Activated B cell treated with CpG ODN at 0.5 μM for 24 hours (primary cell): ENCODE measurements at regions of chr18 and their contacts with region 1.

Region 1: DNA sequence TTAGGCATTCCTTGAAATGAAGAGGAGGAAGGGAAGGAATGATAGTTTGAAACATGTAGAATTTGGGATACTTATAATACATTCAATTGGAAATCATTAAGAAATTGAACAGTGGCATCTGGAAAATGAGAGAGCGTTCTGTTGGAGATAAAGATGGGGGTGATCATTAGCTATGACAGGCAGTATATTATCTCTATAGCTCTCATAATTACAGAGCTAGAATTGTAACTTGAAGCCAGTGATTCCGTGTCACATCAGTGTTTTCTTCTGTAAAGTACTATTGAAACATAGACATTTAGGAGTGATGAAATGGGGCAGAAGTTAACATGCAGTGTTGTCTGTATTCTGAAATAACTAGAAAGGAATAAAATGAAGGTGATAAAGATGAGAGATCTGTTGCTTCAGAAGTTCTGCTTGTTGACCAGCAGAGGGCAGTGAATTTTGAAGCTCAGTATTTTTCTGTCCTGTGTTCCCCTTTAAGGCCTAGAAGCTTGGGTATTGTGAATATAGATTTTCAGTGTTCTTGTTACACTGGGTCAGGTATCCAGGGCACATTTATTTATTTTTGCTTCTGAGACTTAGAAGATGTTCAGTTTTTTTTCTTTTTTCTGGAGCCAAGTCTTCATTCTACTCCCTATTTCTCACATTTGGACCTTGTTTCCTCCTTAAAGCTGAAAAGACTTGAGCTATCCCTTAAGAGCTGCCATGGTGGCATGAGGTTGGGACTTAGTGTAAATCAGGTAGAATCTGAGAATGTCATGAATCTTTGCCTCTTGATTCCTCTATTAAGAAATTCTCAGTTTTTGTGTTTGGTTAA is 157.4 kb downstream of the TAF4B start:
- DNase-seq: no peak
- ATAC-seq: no peak
- H3K4me3 Mint-ChIP-seq: no peak overlapping the region
- H3K27ac Mint-ChIP-seq: no peak overlapping the region
- H3K4me1 Mint-ChIP-seq: no peaks in the 10 kb centered on the region
- H3K27me3 Mint-ChIP-seq: no peaks in the 10 kb centered on the region
- CTCF ChIP-seq: peak; percentile 82

Region 2: DNA sequence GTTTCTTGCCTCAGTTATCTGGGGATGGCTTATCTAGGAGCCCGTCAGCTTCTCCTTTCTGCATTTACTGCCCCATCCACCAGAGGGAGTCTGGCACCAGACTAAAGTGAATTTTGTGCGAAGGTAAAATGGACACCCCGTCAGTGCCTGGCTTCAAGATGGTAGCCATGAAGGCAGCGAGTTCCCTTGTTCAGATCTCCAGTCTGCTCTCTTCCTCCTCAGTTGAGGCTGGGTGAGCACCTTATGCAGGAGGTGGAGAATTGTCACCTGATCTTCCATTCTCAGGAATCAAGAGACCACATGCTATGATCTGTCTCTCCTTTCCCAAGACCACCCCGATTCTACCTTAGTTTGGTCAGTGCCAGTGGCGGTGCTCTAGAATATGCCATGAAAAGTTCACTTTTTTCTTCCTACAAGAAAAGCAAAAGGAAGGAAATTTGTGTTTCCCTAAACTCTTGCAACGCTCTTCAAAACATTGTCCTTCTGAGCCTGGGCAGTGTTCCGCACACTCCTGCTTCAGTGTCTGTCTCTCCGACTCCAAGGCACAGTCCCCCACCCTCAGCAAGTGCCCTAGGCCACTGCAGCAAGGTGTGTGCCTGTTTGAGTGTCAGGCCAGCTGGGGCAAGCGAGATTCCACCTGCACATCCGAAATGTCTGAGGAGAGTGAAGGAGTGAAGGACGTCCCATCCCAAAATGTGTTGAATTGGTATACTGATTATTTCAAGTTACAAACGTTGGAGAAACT is 461.8 kb before region 1 on chr18:
- CTCF ChIA-PET with region 1: no interaction called
- POLR2A ChIA-PET with region 1: no interaction called
- intact Hi-C with region 1: loop called (anchors 2 kb)
- DNase-seq: peak; percentile 23
- ATAC-seq: peak; percentile 57
- H3K4me3 Mint-ChIP-seq: no peak overlapping the region
- H3K27ac Mint-ChIP-seq: no peak overlapping the region
- H3K4me1 Mint-ChIP-seq: peaks cover 2% of the 10 kb centered on the region
- H3K27me3 Mint-ChIP-seq: peaks cover 5% of the 10 kb centered on the region
- CTCF ChIP-seq: no peak

Region 3: DNA sequence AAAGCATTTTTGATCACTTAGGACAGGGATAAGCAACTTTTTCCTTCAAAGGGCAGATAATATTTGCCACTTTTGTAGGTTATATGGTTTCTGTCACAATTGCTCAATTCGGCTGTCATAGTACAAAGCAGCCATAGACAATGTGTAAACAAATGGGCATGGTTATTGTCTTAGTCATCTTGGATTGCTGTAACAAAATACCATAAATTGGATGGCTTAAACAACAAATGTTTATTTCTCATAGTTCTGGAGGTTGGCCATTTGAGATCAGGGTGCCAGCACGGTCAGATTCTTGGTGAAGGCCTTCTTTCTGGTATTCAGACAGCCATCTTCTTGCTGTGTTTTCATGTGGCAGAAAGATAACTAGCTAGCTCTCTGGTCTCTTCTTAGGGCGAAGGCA is 66.3 kb before region 1 on chr18:
- CTCF ChIA-PET with region 1: no interaction called
- POLR2A ChIA-PET with region 1: no interaction called
- intact Hi-C with region 1: no loop called
- DNase-seq: no peak
- ATAC-seq: no peak
- H3K4me3 Mint-ChIP-seq: no peak overlapping the region
- H3K27ac Mint-ChIP-seq: no peak overlapping the region
- H3K4me1 Mint-ChIP-seq: no peaks in the 10 kb centered on the region
- H3K27me3 Mint-ChIP-seq: no peaks in the 10 kb centered on the region
- CTCF ChIP-seq: no peak

Region 4: DNA sequence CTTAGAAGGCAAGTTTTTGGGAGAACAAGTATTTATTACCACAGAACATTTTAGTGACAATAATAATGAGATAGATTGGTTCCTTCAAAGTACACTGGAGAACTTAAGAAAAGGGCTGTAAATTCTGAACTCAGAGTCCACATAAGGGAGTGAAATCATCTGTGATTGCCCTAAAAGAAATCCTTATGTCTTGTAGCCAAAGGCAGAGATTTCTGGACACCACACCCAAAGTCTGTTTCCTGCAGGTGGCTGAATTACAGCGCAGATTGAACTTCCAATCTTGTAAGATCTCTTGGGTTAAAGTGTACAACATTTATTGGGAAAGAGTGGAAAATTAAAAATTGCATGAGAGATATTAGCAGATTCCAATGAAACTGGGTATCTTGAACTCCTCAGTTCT is 13.6 kb before region 1 on chr18:
- CTCF ChIA-PET with region 1: interaction called, 19 read pairs
- POLR2A ChIA-PET with region 1: no interaction called
- intact Hi-C with region 1: no loop called
- DNase-seq: no peak
- ATAC-seq: no peak
- H3K4me3 Mint-ChIP-seq: no peak overlapping the region
- H3K27ac Mint-ChIP-seq: no peak overlapping the region
- H3K4me1 Mint-ChIP-seq: no peaks in the 10 kb centered on the region
- H3K27me3 Mint-ChIP-seq: no peaks in the 10 kb centered on the region
- CTCF ChIP-seq: no peak

Region 5: GRCh38 chr18:26548429-26549262 is 165.0 kb after region 1 on chr18 and contains the start of gene KCTD1:
- CTCF ChIA-PET with region 1: interaction called, 9 read pairs
- POLR2A ChIA-PET with region 1: interaction called, 3 read pairs
- intact Hi-C with region 1: loop called (anchors 1 kb)
- DNase-seq: peak; percentile 56
- ATAC-seq: peak; percentile 73
- H3K4me3 Mint-ChIP-seq: peak within 1 kb of the TSS; percentile 89
- H3K27ac Mint-ChIP-seq: no peak within 1 kb of the TSS
- H3K4me1 Mint-ChIP-seq: peaks cover 47% of the 10 kb centered on the region
- H3K27me3 Mint-ChIP-seq: peaks cover 21% of the 10 kb centered on the region
- CTCF ChIP-seq: no peak
- total RNA-seq, gene KCTD1: 3.7 and 4.9 TPM in 2 replicates

Region 6: DNA sequence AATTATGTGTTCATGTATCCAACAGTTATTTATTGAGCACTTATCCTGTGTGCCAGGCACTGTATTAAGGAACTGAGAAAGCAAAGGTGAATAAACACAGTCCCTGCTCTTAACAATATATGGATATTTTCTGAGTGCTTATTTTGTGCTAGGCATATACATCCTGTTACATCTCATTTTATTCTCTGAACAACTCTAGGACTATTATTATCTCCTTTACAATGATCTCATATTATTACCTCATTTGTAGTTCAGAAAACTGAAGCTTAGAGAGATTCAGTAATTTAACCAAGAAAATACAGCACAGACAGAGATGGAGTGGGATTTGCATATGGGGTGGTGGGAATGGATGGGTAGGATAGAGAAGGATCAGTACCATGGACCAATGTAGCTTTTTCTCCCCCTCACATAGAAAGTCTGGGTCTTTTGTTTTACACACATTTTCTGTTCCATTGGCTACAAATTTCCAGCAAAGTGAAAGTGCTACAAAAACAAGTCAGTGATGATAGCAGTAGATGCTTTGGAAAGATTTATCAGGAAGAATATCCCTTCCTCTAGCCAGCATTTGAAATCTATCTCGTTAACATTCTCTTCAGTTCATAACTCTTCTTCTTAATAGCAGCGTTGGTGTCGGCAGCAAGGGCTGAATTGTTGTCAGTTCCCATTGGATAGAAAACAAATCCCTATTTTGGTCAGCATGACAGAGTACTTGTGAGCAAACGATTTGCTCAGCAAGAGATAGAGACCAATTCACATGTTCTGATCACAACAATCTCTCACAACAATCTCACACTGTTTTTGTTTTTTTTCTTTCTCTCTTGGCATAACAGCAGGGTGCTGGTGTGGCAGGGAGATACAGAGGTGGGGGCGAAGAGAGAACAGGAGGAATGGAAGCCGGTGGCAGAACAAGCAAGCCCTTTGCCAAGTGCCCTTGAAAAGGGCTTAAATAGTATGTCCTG is 266.9 kb after region 1 on chr18:
- CTCF ChIA-PET with region 1: interaction called, 10 read pairs
- POLR2A ChIA-PET with region 1: no interaction called
- intact Hi-C with region 1: loop called (anchors 1 kb)
- DNase-seq: no peak
- ATAC-seq: no peak
- H3K4me3 Mint-ChIP-seq: no peak overlapping the region
- H3K27ac Mint-ChIP-seq: no peak overlapping the region
- H3K4me1 Mint-ChIP-seq: peaks cover 4% of the 10 kb centered on the region
- H3K27me3 Mint-ChIP-seq: peaks cover 42% of the 10 kb centered on the region
- CTCF ChIP-seq: no peak

Region 7: GRCh38 chr18:27005589-27005988 is 621.9 kb after region 1 on chr18:
- CTCF ChIA-PET with region 1: no interaction called
- POLR2A ChIA-PET with region 1: no interaction called
- intact Hi-C with region 1: loop called (anchors 10 kb)
- DNase-seq: no peak
- ATAC-seq: no peak
- H3K4me3 Mint-ChIP-seq: no peak overlapping the region
- H3K27ac Mint-ChIP-seq: no peak overlapping the region
- H3K4me1 Mint-ChIP-seq: no peaks in the 10 kb centered on the region
- H3K27me3 Mint-ChIP-seq: peaks cover 4% of the 10 kb centered on the region
- CTCF ChIP-seq: no peak

Region 8: GRCh38 chr18:27599202-27599829 is 1215.7 kb after region 1 on chr18:
- CTCF ChIA-PET with region 1: no interaction called
- POLR2A ChIA-PET with region 1: no interaction called
- intact Hi-C with region 1: loop called (anchors 2 kb)
- DNase-seq: no peak
- ATAC-seq: no peak
- H3K4me3 Mint-ChIP-seq: no peak overlapping the region
- H3K27ac Mint-ChIP-seq: no peak overlapping the region
- H3K4me1 Mint-ChIP-seq: no peaks in the 10 kb centered on the region
- H3K27me3 Mint-ChIP-seq: no peaks in the 10 kb centered on the region
- CTCF ChIP-seq: no peak